AG04450 (cell line): ENCODE measurements at regions of chrX and their contacts with region 1.

Region 1: GRCh38 chrX:72181178-72182125 is at the start of gene PIN4:
- DNase-seq: peak; percentile 91
- H3K4me3 ChIP-seq: peak within 1 kb of the TSS; percentile 84
- H3K27ac ChIP-seq: peak within 1 kb of the TSS; percentile 92
- H3K27me3 ChIP-seq: no peaks in the 10 kb centered on the region
- CTCF ChIP-seq: no peak
- polyA plus RNA-seq, gene PIN4: 13.1 and 16.9 TPM in 2 replicates

Region 2: GRCh38 chrX:71057848-71058530 is 1123.5 kb before region 1 on chrX:
- CTCF ChIA-PET with region 1: no interaction called
- POLR2A ChIA-PET with region 1: interaction called, 12 read pairs
- DNase-seq: no peak
- H3K4me3 ChIP-seq: no peak overlapping the region
- H3K27ac ChIP-seq: no peak overlapping the region
- H3K27me3 ChIP-seq: no peaks in the 10 kb centered on the region
- CTCF ChIP-seq: no peak